Common myeloid progenitor, CD34-positive (primary cell): ENCODE measurements at regions of chr5 and their contacts with region 1.

Region 1: GRCh38 chr5:171614971-171615653 is 170.5 kb upstream of the SMIM23 start:
- DNase-seq: no peak
- H3K4me3 ChIP-seq: no peak overlapping the region
- H3K27ac ChIP-seq: no peak overlapping the region
- H3K4me1 ChIP-seq: no peaks in the 10 kb centered on the region
- H3K27me3 ChIP-seq: no peaks in the 10 kb centered on the region

Region 2: DNA sequence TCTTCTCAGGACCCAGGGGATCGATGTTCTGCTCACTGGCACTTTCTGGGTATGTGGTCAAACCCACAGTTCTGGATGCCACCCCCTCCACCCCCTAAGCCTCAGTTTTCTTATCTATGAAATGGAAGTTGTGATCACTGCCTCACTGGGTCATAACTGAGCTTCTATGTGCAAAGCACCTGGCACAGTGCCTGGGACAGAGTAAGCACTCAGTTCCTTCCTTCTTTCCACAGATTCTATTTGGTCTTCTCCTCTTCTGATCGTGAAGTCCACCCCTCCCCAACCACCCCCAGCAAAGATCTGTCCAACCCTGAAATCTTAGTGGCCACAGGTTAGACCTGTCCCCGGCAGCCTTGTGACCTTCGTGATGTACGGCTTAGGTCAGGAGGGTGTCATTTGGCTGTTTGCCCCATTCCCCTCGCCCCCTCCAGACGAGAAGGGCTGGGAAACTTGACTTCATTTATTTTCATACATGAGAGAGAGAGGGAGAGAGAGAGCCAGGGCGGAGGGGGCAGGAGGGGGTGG is 14.3 kb before region 1 on chr5:
- CTCF ChIA-PET with region 1: interaction called, 10 read pairs
- POLR2A ChIA-PET with region 1: no interaction called
- DNase-seq: peak in 1 of 3 donors; percentile 57
- H3K4me3 ChIP-seq: peak overlapping the region in 5 of 7 experiments; percentile 23 to 69 (median 48)
- H3K27ac ChIP-seq: peak overlapping the region; percentile 20 to 56
- H3K4me1 ChIP-seq: peaks cover 7 to 35% (median 29%) of the 10 kb centered on the region in 4 experiments
- H3K27me3 ChIP-seq: no peaks in the 10 kb centered on the region